ENCODE measurements at regions of chr13 and their contacts with region 1.

Region 1: GRCh38 chr13:95536632-95537241 is 15.8 kb upstream of the CLDN10 start:
- DNase-seq: peak in 1 of 2 experiments; percentile 21
- ATAC-seq: no peak
- H3K4me3 ChIP-seq: no peak overlapping the region
- H3K27ac ChIP-seq: peak overlapping the region; percentile 63 to 70; a peak in 5 of 6 replicates
- H3K4me1 ChIP-seq: peaks cover 53% of the 10 kb centered on the region
- CTCF ChIP-seq: peak; percentile 54
- EP300 ChIP-seq: no peak
- POLR2A ChIP-seq: no peak
- RAD21 ChIP-seq: peak; percentile 45 to 53

Region 2: DNA sequence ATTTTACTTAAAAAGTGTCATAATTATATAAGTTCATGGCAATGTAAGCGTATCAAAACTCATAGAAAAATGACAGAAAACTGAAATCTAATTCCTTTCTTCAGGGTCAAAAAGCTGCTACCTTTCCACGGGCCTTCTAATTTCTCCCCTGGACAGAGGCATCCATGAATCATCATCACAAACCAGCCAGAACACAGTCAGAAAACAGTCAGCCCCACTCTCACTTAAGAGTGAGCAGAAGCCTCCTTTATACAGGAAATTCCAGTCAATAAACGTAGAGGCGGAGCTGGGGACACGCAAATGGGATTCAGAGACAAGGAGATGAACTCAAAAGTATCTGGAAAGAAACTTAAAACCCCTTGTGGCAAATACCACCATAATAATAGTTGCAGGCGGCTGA is 181.2 kb before region 1 on chr13:
- CTCF ChIA-PET with region 1: no interaction called
- POLR2A ChIA-PET with region 1: no interaction called
- DNase-seq: no peak
- ATAC-seq: no peak
- H3K4me3 ChIP-seq: no peak overlapping the region
- H3K27ac ChIP-seq: no peak overlapping the region
- H3K4me1 ChIP-seq: no peaks in the 10 kb centered on the region
- CTCF ChIP-seq: no peak
- EP300 ChIP-seq: no peak
- POLR2A ChIP-seq: no peak
- RAD21 ChIP-seq: no peak

Region 3: DNA sequence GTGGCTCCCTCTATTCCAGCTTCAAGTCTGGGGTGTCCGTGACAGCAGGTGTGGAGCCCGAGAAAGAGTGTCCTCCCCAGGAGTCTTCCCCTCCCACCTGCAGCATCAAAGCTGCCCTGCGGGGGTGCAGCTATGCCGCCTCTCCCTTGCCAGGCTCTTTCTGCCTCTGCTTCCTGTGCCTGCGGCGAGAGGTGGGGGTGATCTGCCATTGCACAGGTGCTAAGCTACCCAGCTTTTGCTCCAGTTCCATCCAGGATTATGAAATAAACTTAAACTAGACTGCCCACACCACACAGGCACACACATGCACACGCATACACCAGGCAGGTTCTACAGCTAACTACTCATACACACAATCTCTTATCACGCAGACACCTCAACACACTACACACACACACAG is 88.9 kb before region 1 on chr13:
- CTCF ChIA-PET with region 1: no interaction called
- POLR2A ChIA-PET with region 1: no interaction called
- DNase-seq: no peak
- ATAC-seq: no peak
- H3K4me3 ChIP-seq: no peak overlapping the region
- H3K27ac ChIP-seq: no peak overlapping the region
- H3K4me1 ChIP-seq: no peaks in the 10 kb centered on the region
- CTCF ChIP-seq: no peak
- EP300 ChIP-seq: no peak
- POLR2A ChIP-seq: no peak
- RAD21 ChIP-seq: no peak

Region 4: GRCh38 chr13:95547531-95548167 is 10.9 kb after region 1 on chr13:
- CTCF ChIA-PET with region 1: interaction called, 15 read pairs
- POLR2A ChIA-PET with region 1: no interaction called
- DNase-seq: no peak
- ATAC-seq: no peak
- H3K4me3 ChIP-seq: no peak overlapping the region
- H3K27ac ChIP-seq: no peak overlapping the region
- H3K4me1 ChIP-seq: peaks cover 5% of the 10 kb centered on the region; the same call in 1 of the 3 replicates
- CTCF ChIP-seq: no peak
- EP300 ChIP-seq: no peak
- POLR2A ChIP-seq: no peak
- RAD21 ChIP-seq: no peak

Region 5: DNA sequence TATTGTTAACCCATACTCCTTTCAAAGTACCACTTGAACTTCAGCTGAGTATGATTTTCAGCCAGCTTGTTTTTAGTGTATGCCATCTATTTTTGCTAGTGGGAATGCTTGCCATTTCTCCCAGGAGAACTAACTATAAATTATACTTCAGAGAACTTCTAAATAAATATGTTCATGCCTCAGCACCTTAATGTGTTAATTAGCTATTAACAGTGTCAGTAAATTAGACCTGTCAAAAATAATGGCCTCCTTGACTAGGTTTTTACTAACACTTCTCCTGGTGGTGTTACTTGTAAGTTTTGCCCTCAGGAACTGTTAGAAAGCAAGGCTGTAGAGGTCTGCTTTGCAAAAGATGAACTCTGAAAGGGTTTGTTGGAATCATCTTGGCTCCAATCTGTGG is 20.3 kb after region 1 on chr13:
- CTCF ChIA-PET with region 1: interaction called, 13 read pairs
- POLR2A ChIA-PET with region 1: no interaction called
- DNase-seq: no peak
- ATAC-seq: no peak
- H3K4me3 ChIP-seq: no peak overlapping the region
- H3K27ac ChIP-seq: no peak overlapping the region
- H3K4me1 ChIP-seq: peaks cover 11% of the 10 kb centered on the region; the same call in 2 of the 3 replicates
- CTCF ChIP-seq: 0 out of 3 replicates have a peak, but pooled peaks have one; percentile 1
- EP300 ChIP-seq: no peak
- POLR2A ChIP-seq: no peak
- RAD21 ChIP-seq: no peak

Region 6: DNA sequence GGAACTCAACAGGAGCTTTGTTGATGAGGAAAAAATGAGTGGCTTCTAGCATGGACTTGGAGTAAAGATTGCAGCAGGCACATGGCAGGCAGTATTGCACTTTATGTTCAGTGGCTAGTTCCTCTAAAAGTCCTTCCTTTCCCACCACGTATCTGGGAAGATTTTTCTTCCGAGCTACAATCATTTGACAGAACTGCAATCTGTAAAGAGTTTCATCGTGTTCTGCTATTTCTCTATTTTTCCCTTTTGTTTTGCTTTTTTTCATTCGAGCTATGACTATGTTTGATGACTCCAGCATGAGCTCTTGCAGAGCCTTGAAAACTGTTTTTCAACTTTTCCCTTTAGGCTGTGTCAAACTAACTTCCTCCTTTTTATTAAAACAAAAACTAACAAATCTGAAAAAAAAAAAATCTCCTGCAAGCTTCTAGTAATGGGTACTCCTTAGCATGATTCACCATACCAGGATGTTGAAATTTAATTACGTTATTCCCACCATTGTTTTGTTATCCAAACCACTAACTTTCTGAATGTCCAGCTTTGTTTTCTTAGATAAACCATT is 28.1 kb after region 1 on chr13:
- CTCF ChIA-PET with region 1: interaction called, 22 read pairs
- POLR2A ChIA-PET with region 1: no interaction called
- DNase-seq: no peak
- ATAC-seq: no peak; a peak in 2 of 6 replicates
- H3K4me3 ChIP-seq: no peak overlapping the region
- H3K27ac ChIP-seq: no peak overlapping the region
- H3K4me1 ChIP-seq: peaks cover 5% of the 10 kb centered on the region; the same call in 2 of the 3 replicates
- CTCF ChIP-seq: no peak
- EP300 ChIP-seq: no peak
- POLR2A ChIP-seq: no peak
- RAD21 ChIP-seq: no peak